ENCODE measurements at regions of chr3 and their contacts with region 1.

Region 1: DNA sequence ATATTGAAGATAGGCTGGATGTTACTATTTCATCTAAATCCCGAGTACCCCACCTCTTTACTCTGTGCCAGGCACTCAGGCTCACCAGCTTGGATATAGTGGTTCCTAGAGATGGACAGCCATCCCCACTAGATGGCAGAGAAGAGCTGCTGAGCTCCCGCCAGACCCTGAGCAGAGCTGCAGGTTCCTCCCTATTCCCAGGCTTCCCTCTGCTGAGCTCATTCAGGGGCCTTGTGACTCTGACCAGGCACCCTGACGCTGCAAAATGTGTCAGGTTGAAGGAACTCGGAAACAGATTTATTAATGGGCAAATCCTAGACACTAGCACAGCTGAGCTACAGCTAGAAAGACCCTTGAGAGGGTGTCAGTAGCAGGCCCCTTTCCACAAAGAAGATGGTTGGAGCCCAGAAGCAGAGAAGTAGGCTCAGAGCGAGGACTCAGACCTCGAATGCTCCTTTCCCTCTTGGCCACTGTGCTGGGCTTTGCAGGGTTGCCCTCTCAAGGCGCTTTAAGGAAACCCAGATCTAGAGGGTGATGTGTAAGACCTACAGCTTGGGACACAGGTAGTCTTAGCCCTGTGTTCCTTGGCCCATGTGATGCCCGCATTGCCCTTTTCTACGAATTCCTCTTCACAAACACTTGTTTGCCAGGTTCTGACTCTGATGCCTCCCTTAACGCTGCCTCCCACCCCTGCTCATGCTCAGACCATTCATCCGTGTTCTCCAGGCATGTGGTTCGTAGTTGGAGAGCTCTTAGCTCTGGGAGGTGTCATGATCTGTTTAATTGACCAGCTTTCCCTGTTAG is 38.0 kb upstream of the RHO start:
- DNase-seq: peak; percentile 84 to 92 (median 92)
- ATAC-seq: peak; percentile 88 to 91
- H3K4me3 ChIP-seq: no peak overlapping the region
- H3K27ac ChIP-seq: peak overlapping the region; percentile 84
- H3K4me1 ChIP-seq: peaks cover 9% of the 10 kb centered on the region
- H3K27me3 ChIP-seq: no peaks in the 10 kb centered on the region

Region 2: GRCh38 chr3:129409541-129409940 is 80.9 kb before region 1 on chr3:
- intact Hi-C with region 1: no loop called
- DNase-seq: no peak
- ATAC-seq: no peak
- H3K4me3 ChIP-seq: no peak overlapping the region
- H3K27ac ChIP-seq: no peak overlapping the region
- H3K4me1 ChIP-seq: peaks cover 3% of the 10 kb centered on the region
- H3K27me3 ChIP-seq: no peaks in the 10 kb centered on the region

Region 3: GRCh38 chr3:129439817-129440617 is 50.4 kb before region 1 on chr3 and contains the starts of genes IFT122 and MBD4:
- intact Hi-C with region 1: no loop called
- DNase-seq: peak; percentile 98 to 99 (median 99)
- ATAC-seq: peak; percentile 96 to 97
- H3K4me3 ChIP-seq: peak within 1 kb of the TSS; percentile 64
- H3K27ac ChIP-seq: peak within 1 kb of the TSS; percentile 94
- H3K4me1 ChIP-seq: peaks cover 22% of the 10 kb centered on the region
- H3K27me3 ChIP-seq: no peaks in the 10 kb centered on the region
- total RNA-seq, gene IFT122: 30.7 to 46.4 (median 35.9) TPM
- total RNA-seq, gene MBD4: 25.3 to 52.1 (median 25.7) TPM

Region 4: DNA sequence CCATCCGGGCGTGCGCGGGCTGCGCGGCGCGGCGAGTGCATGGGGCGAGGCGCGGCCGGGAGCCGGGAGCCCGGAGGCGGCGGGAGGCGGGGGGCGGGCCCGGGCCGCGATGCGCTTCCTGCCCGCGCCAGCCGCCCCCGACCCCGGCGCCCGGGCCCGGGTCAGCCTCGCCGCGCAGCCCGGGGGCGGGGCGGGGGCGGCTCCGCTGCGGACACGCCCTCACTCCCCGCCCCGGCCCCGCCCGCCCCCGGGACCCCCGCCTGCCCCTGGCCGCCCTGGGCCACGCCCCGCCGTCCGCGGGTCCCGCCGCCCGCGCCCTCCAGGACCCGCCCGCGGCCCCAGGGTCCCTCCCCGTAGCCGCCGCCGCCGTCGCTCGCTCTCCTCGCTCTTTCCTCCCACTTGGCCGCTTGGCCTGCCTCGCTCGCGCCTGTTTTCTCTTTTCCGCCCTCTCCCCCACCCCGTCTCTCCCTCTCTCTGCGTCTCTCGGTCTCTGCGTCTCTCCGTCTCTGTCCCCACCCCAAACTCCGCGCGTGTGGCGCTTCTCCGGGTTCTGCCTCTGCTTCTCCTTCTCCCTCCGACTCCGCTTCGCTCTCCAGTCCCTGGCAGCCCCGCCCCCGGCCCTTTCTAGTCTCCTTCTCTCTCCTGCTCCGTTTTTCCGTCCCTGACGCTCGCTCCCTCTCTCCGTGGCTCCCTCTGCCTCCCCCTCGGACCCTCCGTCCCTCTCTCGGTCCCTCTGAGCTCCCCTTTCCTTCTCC is 116.4 kb after region 1 on chr3 and contains the start of gene PLXND1:
- intact Hi-C with region 1: loop called in 3 of 4 experiments (anchors 5 to 10 kb)
- DNase-seq: peak; percentile 89 to 95 (median 94)
- ATAC-seq: peak; percentile 72 to 78
- H3K4me3 ChIP-seq: peak within 1 kb of the TSS; percentile 71
- H3K27ac ChIP-seq: peak within 1 kb of the TSS; percentile 99
- H3K4me1 ChIP-seq: peaks cover 7% of the 10 kb centered on the region
- H3K27me3 ChIP-seq: no peaks in the 10 kb centered on the region
- total RNA-seq, gene PLXND1: 75.4 to 102 (median 84.1) TPM

Region 5: DNA sequence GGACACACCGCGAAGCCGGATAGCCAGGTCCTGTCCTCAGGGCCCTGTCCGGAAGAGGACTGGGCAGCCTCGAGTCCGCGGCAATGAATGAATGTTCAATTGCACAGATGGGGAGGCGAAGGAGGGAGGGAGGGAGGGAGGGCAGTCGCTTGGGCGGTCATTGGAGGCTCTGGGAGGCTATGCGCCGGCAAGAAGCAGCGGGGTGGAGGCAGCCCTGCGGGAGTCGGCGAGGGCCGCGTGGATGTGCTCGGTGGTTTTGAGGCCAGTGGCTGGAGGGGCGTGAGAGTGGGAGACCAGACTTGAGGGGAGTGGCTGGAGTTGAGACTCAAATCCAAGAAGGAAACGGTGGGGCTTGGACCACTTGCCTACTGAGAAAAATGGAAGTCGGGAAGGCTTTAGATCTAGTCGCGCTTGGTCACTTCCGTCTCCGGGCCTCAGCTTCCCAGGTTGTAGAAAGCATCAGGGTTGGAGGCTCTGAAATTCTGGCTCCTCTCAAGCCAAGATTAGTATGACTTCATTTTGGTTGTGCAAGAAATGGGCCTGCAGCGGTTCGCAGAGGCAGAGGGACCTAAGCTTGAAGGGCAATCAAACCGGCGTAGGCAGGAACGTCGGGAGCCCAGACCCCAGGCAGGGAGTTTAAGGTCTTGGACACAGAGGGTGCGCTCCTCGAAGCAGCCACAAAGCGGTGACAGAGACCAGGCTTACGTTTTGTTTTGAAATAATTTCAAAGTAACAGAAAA is 137.2 kb after region 1 on chr3:
- intact Hi-C with region 1: loop called in 1 of 4 experiments (anchors 10 kb)
- DNase-seq: peak; percentile 82 to 88 (median 88)
- ATAC-seq: peak; percentile 39 to 47
- H3K4me3 ChIP-seq: peak overlapping the region; percentile 48
- H3K27ac ChIP-seq: peak overlapping the region; percentile 97
- H3K4me1 ChIP-seq: peaks cover 20% of the 10 kb centered on the region
- H3K27me3 ChIP-seq: no peaks in the 10 kb centered on the region